ENCODE measurements at regions of chr15 and their contacts with region 1.

Region 1: DNA sequence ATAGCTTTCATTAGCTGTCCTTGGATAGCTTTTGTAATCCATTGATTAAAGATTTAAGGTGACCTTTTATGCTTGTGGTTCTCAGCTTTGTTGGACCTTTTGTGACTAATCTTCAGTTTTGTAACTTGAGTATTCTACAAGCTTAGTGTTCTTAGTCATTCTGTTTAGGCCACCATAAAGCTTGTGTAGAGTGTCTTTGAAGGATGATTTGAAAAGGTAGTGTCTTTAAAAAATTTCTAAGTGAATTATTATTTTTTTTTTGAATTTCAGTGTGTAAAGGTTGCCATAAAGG is 7.5 kb downstream of the MORF4L1 start:
- DNase-seq: no peak
- H3K4me3 ChIP-seq: no peak overlapping the region
- H3K27ac ChIP-seq: no peak overlapping the region
- H3K4me1 ChIP-seq: peaks cover 1 to 8% (median 6%) of the 10 kb centered on the region in 4 experiments; a peak in 3 of 7 replicates
- H3K27me3 ChIP-seq: no peaks in the 10 kb centered on the region
- CTCF ChIP-seq: no peak
- EP300 ChIP-seq: no peak
- POLR2A ChIP-seq: no peak
- RAD21 ChIP-seq: no peak

Region 2: GRCh38 chr15:78524230-78524629 is 356.0 kb before region 1 on chr15:
- CTCF ChIA-PET with region 1: no interaction called
- POLR2A ChIA-PET with region 1: no interaction called
- DNase-seq: no peak
- H3K4me3 ChIP-seq: no peak overlapping the region
- H3K27ac ChIP-seq: no peak overlapping the region
- H3K4me1 ChIP-seq: no peaks in the 10 kb centered on the region
- H3K27me3 ChIP-seq: no peaks in the 10 kb centered on the region
- CTCF ChIP-seq: no peak
- EP300 ChIP-seq: no peak
- POLR2A ChIP-seq: no peak
- RAD21 ChIP-seq: no peak

Region 3: GRCh38 chr15:78850941-78851755 is 29.0 kb before region 1 on chr15:
- CTCF ChIA-PET with region 1: no interaction called
- POLR2A ChIA-PET with region 1: no interaction called
- DNase-seq: no peak
- H3K4me3 ChIP-seq: no peak overlapping the region
- H3K27ac ChIP-seq: no peak overlapping the region
- H3K4me1 ChIP-seq: peaks cover 3 to 8% (median 5%) of the 10 kb centered on the region in 4 experiments
- H3K27me3 ChIP-seq: no peaks in the 10 kb centered on the region
- CTCF ChIP-seq: no peak
- EP300 ChIP-seq: no peak
- POLR2A ChIP-seq: no peak
- RAD21 ChIP-seq: no peak

Region 4: DNA sequence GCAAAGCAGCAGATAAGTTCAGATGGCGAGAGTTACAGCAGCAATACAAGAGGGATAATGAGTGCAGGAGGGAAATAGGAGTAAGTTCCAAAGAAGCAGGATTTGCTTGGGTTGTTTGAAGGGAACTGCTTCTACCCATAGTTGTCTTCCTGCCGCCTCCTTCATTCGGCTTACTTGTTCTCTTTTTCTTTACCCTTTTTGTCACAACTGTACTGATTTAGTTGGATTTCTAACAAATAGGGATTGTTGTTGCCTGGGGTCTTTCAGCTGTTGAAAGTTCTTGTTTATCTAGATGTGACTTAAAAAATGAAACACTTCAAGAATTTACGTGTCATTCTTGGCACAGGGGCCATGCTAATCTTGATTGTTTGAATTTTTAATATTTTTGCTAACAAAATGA is 18.4 kb after region 1 on chr15:
- CTCF ChIA-PET with region 1: interaction called, 5 read pairs
- POLR2A ChIA-PET with region 1: interaction called, 14 read pairs
- DNase-seq: no peak
- H3K4me3 ChIP-seq: no peak overlapping the region
- H3K27ac ChIP-seq: no peak overlapping the region
- H3K4me1 ChIP-seq: no peaks in the 10 kb centered on the region
- H3K27me3 ChIP-seq: no peaks in the 10 kb centered on the region
- CTCF ChIP-seq: no peak
- EP300 ChIP-seq: no peak
- POLR2A ChIP-seq: peak in 1 of 2 experiments; percentile 53; a peak in 1 of 3 replicates
- RAD21 ChIP-seq: no peak

Measured in H1 (cell line).